ACHN (cell line): ENCODE measurements at regions of chr9 and their contacts with region 1.

Region 1: GRCh38 chr9:25964239-25964638 is 286.0 kb upstream of the TUSC1 start:
- DNase-seq: peak; percentile 82

Region 2: GRCh38 chr9:26326473-26327044 is 362.3 kb after region 1 on chr9:
- in situ Hi-C with region 1: loop called (anchors 25 kb)
- DNase-seq: peak; percentile 74